Activated B cell treated with CpG ODN at 0.5 μM for 24 hours (primary cell): ENCODE measurements at regions of chr16 and their contacts with region 1.

Region 1: GRCh38 chr16:49592546-49593423 is 219.2 kb downstream of the C16orf78 start:
- DNase-seq: no peak
- ATAC-seq: peak; percentile 34
- H3K4me3 Mint-ChIP-seq: no peak overlapping the region
- H3K27ac Mint-ChIP-seq: no peak overlapping the region
- H3K4me1 Mint-ChIP-seq: no peaks in the 10 kb centered on the region
- H3K27me3 Mint-ChIP-seq: peaks cover 23% of the 10 kb centered on the region
- CTCF ChIP-seq: no peak

Region 2: DNA sequence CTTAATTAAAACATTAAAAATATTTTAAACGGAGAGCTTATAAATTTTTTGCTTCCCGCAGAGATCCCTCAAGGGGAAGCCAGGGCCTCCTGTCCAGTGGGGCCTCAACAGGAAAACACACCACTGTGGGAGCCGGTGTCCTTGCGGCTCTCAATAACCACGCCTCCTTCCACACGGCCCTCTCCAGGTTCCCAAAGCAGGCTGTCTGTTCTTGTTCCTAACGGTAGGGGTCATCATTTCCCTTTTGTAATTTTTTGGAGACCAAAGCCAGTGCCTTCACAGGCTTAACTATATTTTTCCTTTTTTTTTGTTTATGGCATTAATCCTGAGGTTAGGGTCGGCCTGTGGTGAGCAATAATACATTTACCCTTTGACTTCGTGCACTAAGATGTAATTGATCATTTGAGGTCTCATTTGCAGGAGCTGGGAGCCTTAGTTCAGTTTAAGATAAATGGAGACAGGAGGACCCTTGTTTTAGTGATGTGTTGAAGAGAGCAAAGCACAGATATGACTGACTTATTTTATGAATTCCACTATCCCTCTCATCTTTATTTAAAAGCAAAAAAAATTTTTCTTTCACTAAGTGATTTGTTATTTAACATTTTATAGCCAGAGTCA is 905.3 kb before region 1 on chr16:
- CTCF ChIA-PET with region 1: no interaction called
- POLR2A ChIA-PET with region 1: no interaction called
- intact Hi-C with region 1: loop called (anchors 5 kb)
- DNase-seq: no peak
- ATAC-seq: no peak
- H3K4me3 Mint-ChIP-seq: no peak overlapping the region
- H3K27ac Mint-ChIP-seq: no peak overlapping the region
- H3K4me1 Mint-ChIP-seq: no peaks in the 10 kb centered on the region
- H3K27me3 Mint-ChIP-seq: peaks cover 27% of the 10 kb centered on the region
- CTCF ChIP-seq: no peak

Region 3: GRCh38 chr16:48918520-48919258 is 674.1 kb before region 1 on chr16:
- CTCF ChIA-PET with region 1: no interaction called
- POLR2A ChIA-PET with region 1: no interaction called
- intact Hi-C with region 1: no loop called
- DNase-seq: no peak
- ATAC-seq: no peak
- H3K4me3 Mint-ChIP-seq: no peak overlapping the region
- H3K27ac Mint-ChIP-seq: no peak overlapping the region
- H3K4me1 Mint-ChIP-seq: no peaks in the 10 kb centered on the region
- H3K27me3 Mint-ChIP-seq: no peaks in the 10 kb centered on the region
- CTCF ChIP-seq: no peak

Region 4: GRCh38 chr16:49407873-49408550 is 184.8 kb before region 1 on chr16:
- CTCF ChIA-PET with region 1: interaction called, 22 read pairs
- POLR2A ChIA-PET with region 1: no interaction called
- intact Hi-C with region 1: no loop called
- DNase-seq: peak; percentile 29
- ATAC-seq: peak; percentile 61
- H3K4me3 Mint-ChIP-seq: no peak overlapping the region
- H3K27ac Mint-ChIP-seq: no peak overlapping the region
- H3K4me1 Mint-ChIP-seq: peaks cover 4% of the 10 kb centered on the region
- H3K27me3 Mint-ChIP-seq: peaks cover 10% of the 10 kb centered on the region
- CTCF ChIP-seq: no peak

Region 5: DNA sequence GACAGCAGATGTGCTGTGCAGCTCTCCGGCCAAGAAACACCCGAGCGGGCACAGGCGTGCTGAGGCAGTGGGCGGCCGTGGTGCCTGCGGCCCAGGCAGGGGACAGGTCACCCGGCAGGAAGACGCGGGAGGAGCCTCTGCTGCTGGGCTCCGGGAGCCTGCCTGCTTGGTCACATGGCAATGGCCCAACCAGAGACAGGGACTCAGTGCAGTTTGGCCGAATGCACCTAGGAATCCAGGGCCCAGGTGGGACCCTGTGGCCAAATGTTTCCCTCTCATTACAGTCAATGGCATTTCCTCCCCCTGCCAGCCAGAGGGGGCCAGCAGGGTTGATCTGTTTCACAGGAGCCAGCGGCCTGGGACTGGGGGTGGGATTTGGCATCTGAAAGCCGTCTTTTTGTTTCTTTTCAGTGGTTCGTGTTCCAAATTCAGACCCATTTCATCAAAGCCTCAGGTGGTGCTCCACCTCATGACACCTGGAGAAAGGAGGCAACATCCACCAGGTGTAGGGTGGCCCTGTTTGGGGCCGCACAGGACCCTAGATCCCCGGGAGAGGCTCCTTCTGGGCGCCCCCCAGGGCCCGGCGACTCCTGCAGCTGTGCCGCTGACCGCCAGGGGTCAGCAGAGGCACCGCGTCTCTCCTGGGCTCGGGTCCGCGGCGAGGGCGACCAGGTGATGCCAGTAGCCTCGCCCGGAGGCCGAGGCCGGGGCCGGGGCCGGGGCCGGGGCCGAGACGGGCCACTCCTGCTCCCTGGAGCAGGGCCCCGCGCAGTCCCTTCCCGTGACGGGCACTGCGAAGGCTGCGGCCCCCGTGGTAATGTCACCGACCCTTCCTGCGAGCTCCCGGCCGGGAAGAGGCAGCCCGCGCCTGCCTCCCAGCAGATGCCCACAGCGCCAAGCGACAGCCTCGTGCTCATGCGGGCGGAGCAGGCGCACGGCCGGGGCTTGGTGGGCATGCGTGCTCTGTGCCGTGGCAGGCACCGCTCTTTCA is 100.7 kb before region 1 on chr16:
- CTCF ChIA-PET with region 1: interaction called, 3 read pairs
- POLR2A ChIA-PET with region 1: no interaction called
- intact Hi-C with region 1: loop called (anchors 1 kb)
- DNase-seq: peak; percentile 32
- ATAC-seq: peak; percentile 65
- H3K4me3 Mint-ChIP-seq: no peak overlapping the region
- H3K27ac Mint-ChIP-seq: no peak overlapping the region
- H3K4me1 Mint-ChIP-seq: no peaks in the 10 kb centered on the region
- H3K27me3 Mint-ChIP-seq: peaks cover 7% of the 10 kb centered on the region
- CTCF ChIP-seq: no peak

Region 6: GRCh38 chr16:49639739-49640431 is 47.1 kb after region 1 on chr16:
- CTCF ChIA-PET with region 1: no interaction called
- POLR2A ChIA-PET with region 1: no interaction called
- intact Hi-C with region 1: no loop called
- DNase-seq: no peak
- ATAC-seq: no peak
- H3K4me3 Mint-ChIP-seq: no peak overlapping the region
- H3K27ac Mint-ChIP-seq: no peak overlapping the region
- H3K4me1 Mint-ChIP-seq: peaks cover 3% of the 10 kb centered on the region
- H3K27me3 Mint-ChIP-seq: peaks cover 2% of the 10 kb centered on the region
- CTCF ChIP-seq: no peak